HEK293 (cell line): ENCODE measurements at regions of chr10 and their contacts with region 1.

Region 1: GRCh38 chr10:71893920-71894319 is 42.9 kb upstream of the PSAP start:
- H3K4me3 ChIP-seq: no peak overlapping the region
- H3K27ac ChIP-seq: no peak overlapping the region
- H3K4me1 ChIP-seq: no peaks in the 10 kb centered on the region
- CTCF ChIP-seq: no peak

Region 2: GRCh38 chr10:71629131-71629530 is 264.8 kb before region 1 on chr10:
- CTCF ChIA-PET with region 1: no interaction called
- POLR2A ChIA-PET with region 1: no interaction called
- H3K4me3 ChIP-seq: no peak overlapping the region
- H3K27ac ChIP-seq: no peak overlapping the region
- H3K4me1 ChIP-seq: peaks cover 3% of the 10 kb centered on the region; the same call in 1 of the 2 replicates
- CTCF ChIP-seq: no peak

Region 3: DNA sequence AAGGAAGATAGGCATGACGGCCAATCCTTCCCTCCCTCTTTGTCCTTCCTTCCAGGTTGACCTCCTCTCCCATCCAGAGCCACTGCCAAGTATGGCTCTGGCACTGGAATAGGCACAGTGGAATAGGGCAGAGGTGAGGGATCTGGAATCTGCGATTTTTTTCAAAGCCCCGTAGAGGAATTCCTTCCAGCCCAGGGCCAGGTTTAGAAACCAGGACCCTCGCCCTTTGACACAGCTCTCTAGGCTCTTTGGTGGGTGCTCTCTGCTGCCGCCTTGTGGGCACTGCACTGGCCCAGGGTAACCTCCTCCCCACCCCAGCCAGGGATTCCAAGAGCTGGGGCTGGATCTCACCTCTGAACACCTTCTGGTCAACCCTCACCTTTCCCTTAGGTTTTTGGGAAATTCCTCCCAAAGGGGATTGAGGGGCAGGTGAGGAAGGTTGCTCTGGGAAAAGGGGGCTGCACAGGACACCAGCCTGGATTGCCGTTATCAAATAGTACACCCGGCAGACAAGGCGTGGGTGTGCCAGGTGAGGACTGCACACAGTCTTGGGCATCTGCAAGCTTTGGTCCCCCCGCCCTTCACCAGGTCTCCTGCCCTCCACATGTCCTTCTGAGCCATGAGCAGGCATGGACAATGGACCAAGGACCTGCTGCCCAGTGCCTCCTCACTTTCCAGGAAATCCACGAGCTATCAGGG is 197.1 kb before region 1 on chr10:
- CTCF ChIA-PET with region 1: interaction called, 11 read pairs
- POLR2A ChIA-PET with region 1: no interaction called
- H3K4me3 ChIP-seq: no peak overlapping the region
- H3K27ac ChIP-seq: no peak overlapping the region
- H3K4me1 ChIP-seq: no peaks in the 10 kb centered on the region
- CTCF ChIP-seq: peak; percentile 54

Region 4: DNA sequence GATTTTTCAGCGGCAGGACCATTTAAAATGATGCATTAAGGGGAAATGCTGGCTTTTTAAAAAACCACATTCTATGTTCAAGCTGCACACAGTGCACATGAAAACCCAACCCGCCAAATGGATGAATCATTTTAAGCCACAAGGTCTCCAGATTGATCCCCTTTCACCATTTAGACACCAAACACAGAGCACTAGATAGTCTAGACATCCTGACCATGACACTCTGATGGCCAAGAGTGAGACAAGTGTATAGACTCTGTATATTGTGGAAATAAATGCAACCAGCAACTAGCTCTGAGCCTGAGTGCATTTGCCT is 71.5 kb before region 1 on chr10:
- CTCF ChIA-PET with region 1: interaction called, 20 read pairs
- POLR2A ChIA-PET with region 1: interaction called, 3 read pairs
- H3K4me3 ChIP-seq: no peak overlapping the region
- H3K27ac ChIP-seq: no peak overlapping the region
- H3K4me1 ChIP-seq: no peaks in the 10 kb centered on the region
- CTCF ChIP-seq: no peak

Region 5: DNA sequence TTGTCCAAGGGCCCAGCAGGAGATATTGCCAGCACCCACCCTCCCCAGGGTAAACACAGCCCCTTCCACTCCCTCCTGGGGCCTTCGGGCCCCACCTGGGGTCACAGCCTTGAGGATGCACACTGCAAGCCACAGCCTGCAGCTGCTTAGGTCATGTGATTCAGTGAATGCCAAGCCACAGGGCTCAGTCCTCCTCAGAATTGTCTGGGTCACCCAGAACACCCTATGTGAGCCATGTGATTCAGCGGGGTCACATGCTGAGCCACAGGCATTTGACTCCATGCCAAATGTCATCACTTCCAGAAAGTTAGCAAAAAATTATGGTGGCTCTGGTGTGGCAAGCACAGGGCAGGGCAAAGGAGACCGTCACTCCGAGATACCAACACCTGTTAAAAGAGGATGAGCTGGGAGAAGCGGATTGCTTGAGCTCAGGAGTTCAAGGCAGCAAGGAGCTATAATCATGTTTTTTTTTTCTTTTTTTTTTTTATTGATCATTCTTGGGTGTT is 25.7 kb before region 1 on chr10:
- CTCF ChIA-PET with region 1: interaction called, 13 read pairs
- POLR2A ChIA-PET with region 1: no interaction called
- H3K4me3 ChIP-seq: no peak overlapping the region
- H3K27ac ChIP-seq: no peak overlapping the region
- H3K4me1 ChIP-seq: peaks cover 3% of the 10 kb centered on the region; the same call in 1 of the 2 replicates
- CTCF ChIP-seq: no peak

Region 6: GRCh38 chr10:71905164-71905563 is 11.2 kb after region 1 on chr10:
- CTCF ChIA-PET with region 1: interaction called, 26 read pairs
- POLR2A ChIA-PET with region 1: no interaction called
- H3K4me3 ChIP-seq: no peak overlapping the region
- H3K27ac ChIP-seq: no peak overlapping the region
- H3K4me1 ChIP-seq: no peaks in the 10 kb centered on the region
- CTCF ChIP-seq: no peak

Region 7: DNA sequence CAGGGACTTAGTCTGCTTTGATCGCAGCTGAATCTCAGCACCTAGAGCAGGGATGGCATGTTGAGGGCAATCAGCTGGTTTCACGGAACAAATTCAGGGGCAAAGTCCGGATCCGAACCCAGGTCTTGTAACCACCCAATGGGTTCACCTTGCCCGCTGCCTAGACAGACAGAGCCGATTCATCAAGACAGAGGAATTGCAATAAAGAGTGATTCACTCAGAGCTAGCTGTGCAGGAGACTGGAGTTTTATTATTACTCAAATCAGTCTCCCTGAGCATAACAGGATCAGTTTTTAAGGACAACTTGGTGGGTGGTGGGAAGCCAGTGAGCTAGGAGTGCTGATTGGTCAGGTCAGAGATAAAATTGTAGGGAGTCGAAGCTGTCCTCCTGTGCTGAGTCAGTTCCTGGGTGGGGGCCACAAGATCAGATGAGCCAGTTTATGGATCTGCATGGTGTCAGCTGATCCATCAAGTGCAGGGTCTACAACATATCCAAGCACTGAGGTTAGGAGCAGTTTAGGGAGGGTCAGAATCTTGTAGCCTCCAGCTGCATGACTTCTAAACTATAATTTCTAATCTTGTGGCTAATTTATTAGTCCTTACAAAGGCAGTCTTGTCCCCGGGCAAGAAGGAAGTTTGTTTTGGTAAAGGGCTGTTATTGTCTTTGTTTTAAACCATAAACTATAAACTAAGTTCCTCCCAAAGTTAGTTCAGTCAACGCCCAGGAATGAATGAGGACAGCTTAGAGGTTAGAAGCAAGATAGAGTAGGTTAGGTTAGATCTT is 26.8 kb after region 1 on chr10:
- CTCF ChIA-PET with region 1: interaction called, 13 read pairs
- POLR2A ChIA-PET with region 1: no interaction called
- H3K4me3 ChIP-seq: no peak overlapping the region
- H3K27ac ChIP-seq: no peak overlapping the region
- H3K4me1 ChIP-seq: peaks cover 11% of the 10 kb centered on the region; the same call in 1 of the 2 replicates
- CTCF ChIP-seq: no peak

Region 8: DNA sequence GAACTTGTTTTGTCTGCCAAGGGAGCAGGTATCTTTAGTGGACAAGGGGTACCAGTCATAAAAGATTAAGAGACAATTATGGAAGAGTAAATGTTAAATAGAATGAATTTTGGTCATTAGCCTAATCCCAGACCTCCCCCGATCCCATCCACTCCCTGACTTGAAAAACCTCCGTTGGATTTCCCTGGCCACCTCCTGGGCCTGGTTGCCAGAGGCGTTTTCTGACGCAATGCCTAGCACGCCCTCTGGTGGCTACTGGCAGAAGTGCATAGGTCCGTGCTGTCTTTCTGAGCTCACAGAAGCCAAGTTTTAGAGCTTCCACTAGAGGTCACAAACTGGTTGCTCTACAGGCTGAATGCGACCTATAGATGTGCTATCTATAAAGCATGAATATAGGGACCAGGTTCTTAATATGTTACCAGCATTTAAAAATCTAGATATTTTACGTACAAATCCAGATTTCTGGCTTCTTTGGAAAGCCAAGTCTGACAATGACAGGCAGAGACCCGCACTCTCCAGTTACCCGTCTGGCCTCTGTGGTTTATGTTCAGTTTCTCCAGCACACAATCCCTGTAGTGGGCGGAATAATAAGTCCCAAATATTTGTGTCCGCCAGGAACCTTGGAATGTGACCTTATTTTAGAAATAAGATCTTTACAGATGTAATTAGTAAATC is 154.7 kb after region 1 on chr10:
- CTCF ChIA-PET with region 1: interaction called, 70 read pairs
- POLR2A ChIA-PET with region 1: interaction called, 3 read pairs
- H3K4me3 ChIP-seq: no peak overlapping the region
- H3K27ac ChIP-seq: no peak overlapping the region
- H3K4me1 ChIP-seq: no peaks in the 10 kb centered on the region
- CTCF ChIP-seq: peak; percentile 98

Region 9: GRCh38 chr10:72260588-72261322 is 366.8 kb after region 1 on chr10:
- CTCF ChIA-PET with region 1: no interaction called
- POLR2A ChIA-PET with region 1: no interaction called
- H3K4me3 ChIP-seq: peak overlapping the region; percentile 56
- H3K27ac ChIP-seq: peak overlapping the region; percentile 97
- H3K4me1 ChIP-seq: peaks cover 24% of the 10 kb centered on the region
- CTCF ChIP-seq: peak; percentile 70